Caco-2 (cell line): ENCODE measurements at regions of chr19 and their contacts with region 1.

Region 1: DNA sequence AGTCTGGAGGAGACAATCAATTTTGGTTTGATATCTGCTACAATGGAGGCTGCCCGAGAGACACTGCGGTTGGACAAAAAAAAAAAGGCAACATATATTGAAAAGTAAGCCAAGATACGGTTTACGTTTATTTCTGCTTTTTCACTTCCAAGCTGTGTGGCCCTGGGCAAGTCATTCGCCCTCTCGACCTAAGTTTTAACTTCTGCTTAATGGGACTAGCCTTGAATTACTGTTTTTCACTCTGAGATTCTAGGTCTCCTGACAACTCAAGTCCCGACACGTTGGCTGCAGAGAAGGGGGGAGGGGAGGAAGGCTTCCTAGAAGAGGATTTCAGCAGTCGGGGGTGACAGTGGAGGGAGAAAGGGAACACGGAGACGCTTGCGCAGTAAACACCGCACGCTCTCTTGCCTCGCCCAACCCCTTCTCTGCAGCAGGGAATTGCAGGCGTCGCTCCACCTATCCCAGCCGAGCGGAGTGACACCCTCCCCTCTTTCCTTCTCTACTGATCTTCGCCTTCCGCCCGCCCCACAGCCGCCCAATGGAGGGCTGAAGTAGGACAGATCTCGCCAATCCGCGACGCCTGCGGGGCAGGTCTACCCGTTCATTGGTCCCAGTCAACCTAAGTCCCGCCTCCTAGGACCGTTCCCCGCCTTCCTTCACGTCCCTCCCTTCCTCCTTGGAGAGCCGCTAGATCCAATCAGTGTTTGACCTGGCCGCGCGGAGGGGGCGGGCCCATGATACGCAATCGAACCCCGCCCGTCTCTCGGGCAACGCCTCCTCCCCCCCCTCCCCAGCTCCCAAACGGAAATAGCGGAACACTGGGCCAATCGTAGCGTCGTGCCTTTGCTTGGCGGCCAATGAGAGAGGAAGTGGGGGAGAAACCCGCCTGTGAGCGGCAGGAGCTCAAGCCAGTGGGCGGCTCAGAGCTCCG is 529 bp upstream of the AP2A1 start:
- DNase-seq: peak; percentile 100
- H3K4me3 ChIP-seq: peak overlapping the region; percentile 44
- H3K4me3 Mint-ChIP-seq: peak overlapping the region; percentile 86
- H3K27ac Mint-ChIP-seq: peak overlapping the region; percentile 78
- H3K4me1 ChIP-seq: peaks cover 17% of the 10 kb centered on the region
- H3K4me1 Mint-ChIP-seq: peaks cover 24% of the 10 kb centered on the region
- H3K27me3 ChIP-seq: no peaks in the 10 kb centered on the region
- H3K27me3 Mint-ChIP-seq: no peaks in the 10 kb centered on the region
- CTCF ChIP-seq: no peak

Region 2: DNA sequence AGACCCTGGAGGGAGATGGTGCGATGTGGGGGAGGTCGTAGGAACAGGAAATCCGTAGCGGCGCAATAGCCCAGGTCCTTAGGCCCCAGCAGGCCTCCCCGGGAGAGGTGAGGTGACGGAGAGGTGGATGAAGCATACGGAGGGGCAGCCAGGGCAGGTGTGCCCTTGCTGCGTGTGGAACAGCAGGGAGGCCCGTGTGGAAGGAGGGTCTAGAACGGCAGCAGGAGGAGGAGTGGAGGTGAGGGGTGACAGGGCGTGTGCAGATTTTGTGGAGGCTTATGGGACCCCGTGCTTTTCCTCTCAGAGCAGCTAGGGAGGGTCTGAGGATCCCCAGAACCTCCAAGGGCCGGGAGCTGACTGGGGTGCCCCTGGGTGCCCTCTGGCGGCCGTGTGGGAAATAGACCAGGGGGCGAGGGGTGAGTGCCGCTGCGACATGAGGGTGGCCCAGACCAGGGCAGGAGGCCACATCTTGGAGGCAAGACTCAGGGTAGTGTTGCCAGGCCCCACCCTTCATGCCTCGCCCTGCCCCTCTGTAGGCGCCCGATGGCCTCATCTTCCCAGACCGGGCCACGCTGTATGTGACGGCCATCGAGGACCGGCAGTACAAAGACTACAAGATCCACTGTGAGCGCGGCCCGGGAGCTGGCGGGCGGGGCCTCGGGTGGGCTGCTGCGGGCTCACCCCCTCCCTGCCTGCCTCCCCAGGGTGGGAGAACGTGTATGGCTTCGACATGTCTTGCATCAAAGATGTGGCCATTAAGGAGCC is 81.9 kb before region 1 on chr19:
- CTCF ChIA-PET with region 1: interaction called, 6 read pairs
- POLR2A ChIA-PET with region 1: interaction called, 10 read pairs
- intact Hi-C with region 1: loop called (anchors 5 kb)
- DNase-seq: peak in 1 of 2 experiments; percentile 51
- H3K4me3 ChIP-seq: no peak overlapping the region
- H3K4me3 Mint-ChIP-seq: no peak overlapping the region
- H3K27ac Mint-ChIP-seq: peak overlapping the region; percentile 49
- H3K4me1 ChIP-seq: peaks cover 10% of the 10 kb centered on the region
- H3K4me1 Mint-ChIP-seq: peaks cover 15% of the 10 kb centered on the region
- H3K27me3 ChIP-seq: no peaks in the 10 kb centered on the region
- H3K27me3 Mint-ChIP-seq: no peaks in the 10 kb centered on the region
- CTCF ChIP-seq: peak; percentile 47 to 54

Region 3: DNA sequence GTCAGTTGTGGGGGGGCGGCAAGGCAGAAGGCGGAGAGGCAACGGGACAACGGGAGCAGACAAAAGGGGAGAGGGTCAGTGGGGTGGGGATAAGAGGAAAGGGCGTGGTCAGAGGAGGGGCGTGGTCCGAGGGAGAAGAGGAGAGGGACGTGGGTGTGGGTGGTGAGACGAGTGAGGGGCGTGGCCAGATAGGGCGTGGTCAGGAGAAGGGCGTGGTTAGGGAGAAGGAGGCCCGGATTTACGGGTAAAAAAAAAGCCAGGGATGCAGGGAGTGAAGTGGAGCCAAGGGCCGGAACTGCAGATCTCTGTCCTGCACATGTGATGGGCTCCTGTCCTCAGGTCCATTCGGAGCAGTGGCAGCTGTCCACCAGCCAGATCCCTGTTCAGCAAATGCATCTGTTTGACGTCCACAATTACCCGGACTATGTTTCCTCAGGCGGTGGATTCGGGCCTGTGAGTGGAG is 53.8 kb before region 1 on chr19:
- CTCF ChIA-PET with region 1: interaction called, 4 read pairs
- POLR2A ChIA-PET with region 1: interaction called, 6 read pairs
- intact Hi-C with region 1: loop called (anchors 5 kb)
- DNase-seq: peak; percentile 49 to 78
- H3K4me3 ChIP-seq: no peak overlapping the region
- H3K4me3 Mint-ChIP-seq: no peak overlapping the region
- H3K27ac Mint-ChIP-seq: peak overlapping the region; percentile 54
- H3K4me1 ChIP-seq: peaks cover 8% of the 10 kb centered on the region; the same call in 1 of the 2 replicates
- H3K4me1 Mint-ChIP-seq: peaks cover 24% of the 10 kb centered on the region
- H3K27me3 ChIP-seq: no peaks in the 10 kb centered on the region
- H3K27me3 Mint-ChIP-seq: no peaks in the 10 kb centered on the region
- CTCF ChIP-seq: no peak

Region 4: GRCh38 chr19:49738268-49738667 is 28.0 kb before region 1 on chr19:
- CTCF ChIA-PET with region 1: interaction called, 5 read pairs
- POLR2A ChIA-PET with region 1: interaction called, 20 read pairs
- intact Hi-C with region 1: no loop called
- DNase-seq: no peak
- H3K4me3 ChIP-seq: no peak overlapping the region
- H3K4me3 Mint-ChIP-seq: no peak overlapping the region
- H3K27ac Mint-ChIP-seq: no peak overlapping the region
- H3K4me1 ChIP-seq: no peaks in the 10 kb centered on the region
- H3K4me1 Mint-ChIP-seq: no peaks in the 10 kb centered on the region
- H3K27me3 ChIP-seq: no peaks in the 10 kb centered on the region
- H3K27me3 Mint-ChIP-seq: no peaks in the 10 kb centered on the region
- CTCF ChIP-seq: no peak

Region 5: GRCh38 chr19:49808711-49809159 is 42.5 kb after region 1 on chr19:
- CTCF ChIA-PET with region 1: interaction called, 3 read pairs
- POLR2A ChIA-PET with region 1: interaction called, 3 read pairs
- intact Hi-C with region 1: loop called (anchors 1 kb)
- DNase-seq: peak; percentile 95 to 96
- H3K4me3 ChIP-seq: peak overlapping the region; percentile 85
- H3K4me3 Mint-ChIP-seq: peak overlapping the region; percentile 91
- H3K27ac Mint-ChIP-seq: peak overlapping the region; percentile 63
- H3K4me1 ChIP-seq: peaks cover 5% of the 10 kb centered on the region; the same call in 1 of the 2 replicates
- H3K4me1 Mint-ChIP-seq: no peaks in the 10 kb centered on the region
- H3K27me3 ChIP-seq: no peaks in the 10 kb centered on the region
- H3K27me3 Mint-ChIP-seq: no peaks in the 10 kb centered on the region
- CTCF ChIP-seq: no peak

Region 6: DNA sequence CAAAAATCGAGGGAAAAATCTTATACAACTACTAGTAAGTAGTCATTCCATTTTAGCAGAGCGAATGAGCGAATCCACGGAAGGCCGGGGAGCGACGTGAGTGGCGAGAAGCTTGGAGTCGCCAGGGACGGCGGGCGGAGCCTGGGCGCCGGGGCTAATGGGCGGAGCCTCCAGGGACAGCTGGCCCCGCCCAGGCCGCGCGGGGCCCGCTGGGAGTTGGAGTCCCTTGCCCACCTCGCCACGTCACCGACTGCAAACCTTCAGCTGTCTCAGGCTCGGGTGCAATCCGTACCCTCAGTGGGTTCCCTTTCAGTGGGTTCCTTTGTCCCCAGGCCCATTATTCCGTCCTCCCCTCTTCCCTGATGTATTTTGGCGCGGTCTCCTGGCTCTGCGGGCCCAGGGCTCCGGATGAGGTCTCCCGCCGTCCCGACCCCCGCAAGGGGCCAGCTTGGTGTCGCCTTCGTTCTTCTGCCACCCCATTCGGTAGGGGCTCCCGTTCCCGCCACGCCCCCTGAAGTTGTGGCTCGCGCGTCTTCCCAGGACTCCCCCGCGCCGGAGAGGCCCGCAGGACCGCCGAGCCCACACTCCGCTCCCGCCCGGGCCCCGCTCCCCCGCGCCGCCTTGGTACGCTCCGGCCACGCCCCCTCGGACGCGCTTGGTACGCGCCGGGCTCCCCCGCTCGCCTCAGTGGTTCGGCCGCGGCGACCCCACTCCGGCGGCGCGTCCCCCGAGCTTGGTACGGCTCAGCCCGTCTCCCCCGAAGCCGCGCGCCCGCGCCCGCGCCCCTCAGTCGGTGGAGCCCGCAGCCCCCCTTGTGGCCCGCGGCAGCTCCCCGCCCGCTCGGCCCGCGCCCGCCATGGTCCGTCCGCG is 84.4 kb after region 1 on chr19 and contains the start of gene PTOV1:
- CTCF ChIA-PET with region 1: no interaction called
- POLR2A ChIA-PET with region 1: interaction called, 7 read pairs
- intact Hi-C with region 1: loop called (anchors 5 kb)
- DNase-seq: peak; percentile 94 to 96
- H3K4me3 ChIP-seq: peak within 1 kb of the TSS; percentile 73
- H3K4me3 Mint-ChIP-seq: peak within 1 kb of the TSS; percentile 82
- H3K27ac Mint-ChIP-seq: peak within 1 kb of the TSS; percentile 97
- H3K4me1 ChIP-seq: peaks cover 14% of the 10 kb centered on the region
- H3K4me1 Mint-ChIP-seq: peaks cover 17% of the 10 kb centered on the region
- H3K27me3 ChIP-seq: no peaks in the 10 kb centered on the region
- H3K27me3 Mint-ChIP-seq: no peaks in the 10 kb centered on the region
- CTCF ChIP-seq: no peak
- total RNA-seq, gene PTOV1: 209 and 224 TPM in 2 replicates

Region 7: GRCh38 chr19:49877020-49877878 is 111.0 kb after region 1 on chr19 and contains the starts of genes AKT1S1 and TBC1D17:
- CTCF ChIA-PET with region 1: no interaction called
- POLR2A ChIA-PET with region 1: interaction called, 3 read pairs
- intact Hi-C with region 1: loop called (anchors 2 kb)
- DNase-seq: peak; percentile 99 to 100
- H3K4me3 ChIP-seq: peak within 1 kb of the TSS; percentile 87
- H3K4me3 Mint-ChIP-seq: no peak within 1 kb of the TSS
- H3K27ac Mint-ChIP-seq: no peak within 1 kb of the TSS
- H3K4me1 ChIP-seq: peaks cover 9% of the 10 kb centered on the region; the same call in 1 of the 2 replicates
- H3K4me1 Mint-ChIP-seq: no peaks in the 10 kb centered on the region
- H3K27me3 ChIP-seq: no peaks in the 10 kb centered on the region
- H3K27me3 Mint-ChIP-seq: no peaks in the 10 kb centered on the region
- CTCF ChIP-seq: no peak
- total RNA-seq, gene AKT1S1: 64.6 and 77.6 TPM in 2 replicates
- total RNA-seq, gene TBC1D17: 55.3 and 56.5 TPM in 2 replicates